CD4-positive, alpha-beta T cell (primary cell): ENCODE measurements at regions of chr5 and their contacts with region 1.

Region 1: DNA sequence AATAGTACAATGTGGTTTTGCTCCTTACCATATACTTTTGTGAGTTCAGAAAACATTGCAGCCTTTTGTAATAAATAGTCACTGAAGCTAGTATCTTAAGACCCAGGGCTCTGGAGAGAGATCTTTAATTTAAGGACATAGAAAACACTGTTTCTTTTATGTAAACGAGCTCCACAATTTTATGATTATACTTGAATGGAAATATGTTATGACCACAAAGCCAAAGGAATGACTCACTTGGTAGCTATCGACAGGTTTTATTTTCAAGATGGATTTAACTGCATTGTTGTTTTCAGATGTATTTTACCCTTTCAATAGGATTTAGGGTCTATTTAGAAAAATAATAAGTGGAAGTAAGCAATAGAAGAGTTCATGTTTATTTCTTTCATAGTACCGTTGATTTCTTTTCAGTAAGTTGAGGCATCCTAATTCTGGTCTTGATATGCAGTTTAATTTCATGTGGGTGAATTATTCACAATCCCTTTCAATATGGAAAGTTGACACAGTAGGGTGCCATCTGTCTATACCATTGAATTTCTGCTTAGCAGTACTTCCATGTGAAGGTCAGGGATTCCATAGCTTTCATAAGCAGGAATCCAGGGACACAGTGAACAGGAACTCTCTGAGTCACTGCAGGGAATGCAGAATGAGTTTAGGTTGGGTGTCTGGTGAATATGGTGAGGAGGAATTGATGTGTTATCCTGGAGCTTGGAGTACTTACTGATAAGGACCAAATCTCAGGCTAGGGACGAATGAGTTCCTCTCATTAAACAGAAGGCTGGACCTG is 157.6 kb downstream of the CD180 start:
- DNase-seq: no peak
- ATAC-seq: no peak
- H3K4me3 ChIP-seq: no peak overlapping the region
- H3K4me3 Mint-ChIP-seq: no peak overlapping the region
- H3K27ac ChIP-seq: no peak overlapping the region
- H3K27ac Mint-ChIP-seq: no peak overlapping the region
- H3K4me1 ChIP-seq: no peaks in the 10 kb centered on the region
- H3K4me1 Mint-ChIP-seq: peaks cover 26% of the 10 kb centered on the region
- H3K27me3 ChIP-seq: no peaks in the 10 kb centered on the region
- H3K27me3 Mint-ChIP-seq: no peaks in the 10 kb centered on the region
- CTCF ChIP-seq: no peak

Region 2: DNA sequence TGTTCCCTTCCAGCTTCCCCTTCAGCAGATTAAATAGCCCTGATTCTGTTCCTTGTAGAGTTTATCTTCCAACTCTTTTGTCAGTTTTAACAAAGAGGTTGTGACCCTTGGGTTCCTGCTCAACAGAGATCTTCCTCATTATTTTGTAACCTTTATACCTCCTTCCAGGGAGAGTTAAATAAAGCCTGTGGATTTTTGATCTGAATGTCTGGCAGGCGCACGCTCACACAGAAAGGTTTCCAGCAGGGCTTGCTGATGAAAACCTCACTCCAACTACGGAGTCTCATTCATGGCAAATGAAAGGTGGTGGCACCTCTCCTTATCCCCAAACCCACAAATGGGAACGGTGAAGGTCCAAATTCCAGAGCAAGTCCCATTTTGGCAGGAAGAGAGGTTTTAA is 765.9 kb before region 1 on chr5:
- CTCF ChIA-PET with region 1: no interaction called
- POLR2A ChIA-PET with region 1: no interaction called
- intact Hi-C with region 1: no loop called
- DNase-seq: no peak
- ATAC-seq: no peak
- H3K4me3 ChIP-seq: no peak overlapping the region
- H3K4me3 Mint-ChIP-seq: no peak overlapping the region
- H3K27ac ChIP-seq: no peak overlapping the region
- H3K27ac Mint-ChIP-seq: no peak overlapping the region
- H3K4me1 ChIP-seq: no peaks in the 10 kb centered on the region
- H3K4me1 Mint-ChIP-seq: no peaks in the 10 kb centered on the region
- H3K27me3 ChIP-seq: no peaks in the 10 kb centered on the region
- H3K27me3 Mint-ChIP-seq: peaks cover 28% of the 10 kb centered on the region
- CTCF ChIP-seq: no peak

Region 3: GRCh38 chr5:67028361-67028760 is 10.6 kb before region 1 on chr5:
- CTCF ChIA-PET with region 1: no interaction called
- POLR2A ChIA-PET with region 1: no interaction called
- intact Hi-C with region 1: loop called in 1 of 2 experiments (anchors 1 kb)
- DNase-seq: peak in 1 of 14 experiments; percentile 30
- ATAC-seq: no peak
- H3K4me3 ChIP-seq: no peak overlapping the region
- H3K4me3 Mint-ChIP-seq: no peak overlapping the region
- H3K27ac ChIP-seq: no peak overlapping the region
- H3K27ac Mint-ChIP-seq: no peak overlapping the region
- H3K4me1 ChIP-seq: peaks cover 14% of the 10 kb centered on the region
- H3K4me1 Mint-ChIP-seq: peaks cover 72% of the 10 kb centered on the region
- H3K27me3 ChIP-seq: no peaks in the 10 kb centered on the region
- H3K27me3 Mint-ChIP-seq: no peaks in the 10 kb centered on the region
- CTCF ChIP-seq: no peak